Esophagus muscularis mucosa (tissue), 4 donors: ENCODE measurements at regions of chr1 and their contacts with region 1.

Region 1: GRCh38 chr1:151739590-151740375 is 18.5 kb downstream of the RIIAD1 start:
- DNase-seq: no peak
- H3K4me3 ChIP-seq: no peak overlapping the region
- H3K27ac ChIP-seq: no peak overlapping the region
- H3K4me1 ChIP-seq: peaks cover 0 to 6% (median 3%) of the 10 kb centered on the region in 4 donors
- H3K27me3 ChIP-seq: no peaks in the 10 kb centered on the region
- CTCF ChIP-seq: no peak
- EP300 ChIP-seq: no peak
- POLR2A ChIP-seq: no peak

Region 2: DNA sequence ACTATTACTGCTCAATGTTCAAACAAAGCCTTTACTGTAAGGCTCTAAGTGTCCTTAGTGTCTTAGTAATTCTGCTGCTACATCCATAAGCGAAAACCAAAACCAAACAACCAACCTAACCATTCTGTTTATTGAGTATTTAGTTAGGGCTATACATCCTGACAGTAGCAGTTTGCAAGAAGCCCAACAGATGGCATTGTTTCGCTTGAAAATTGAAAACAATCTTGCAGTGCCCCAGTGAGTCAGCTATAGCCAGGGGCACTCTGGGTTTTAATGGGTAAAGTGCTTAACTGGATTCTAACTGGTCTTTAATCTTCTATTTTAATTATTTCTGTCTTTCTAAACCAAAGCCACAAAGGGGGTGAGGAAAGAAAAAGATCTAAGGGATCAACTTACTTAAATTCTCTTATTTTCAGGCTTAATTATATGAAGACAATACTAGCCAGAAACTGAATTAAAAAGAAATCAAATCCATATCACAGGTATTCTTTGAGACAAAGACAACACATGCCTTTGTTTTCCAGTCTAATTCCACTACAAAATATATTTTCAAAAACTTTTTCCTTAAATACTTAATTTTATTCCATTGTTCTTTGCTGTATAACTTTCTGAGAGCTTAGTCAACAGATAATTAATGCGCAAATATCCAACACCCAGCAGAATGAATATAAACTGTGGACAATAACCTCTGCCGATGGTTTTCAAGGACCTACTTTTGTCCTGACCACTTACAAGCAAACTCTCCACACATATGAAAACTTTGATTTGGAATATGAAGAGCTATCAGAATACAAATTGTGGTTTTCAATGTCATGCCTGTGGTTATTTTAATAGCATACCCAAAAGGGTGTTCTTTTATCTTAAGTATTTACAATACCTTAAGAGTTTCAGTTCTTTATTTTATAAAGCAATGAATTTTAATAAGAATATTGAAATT is 295.7 kb before region 1 on chr1:
- intact Hi-C with region 1: loop called (anchors 5 kb)
- DNase-seq: no peak
- H3K4me3 ChIP-seq: no peak overlapping the region
- H3K27ac ChIP-seq: peak overlapping the region; percentile 45 to 55 (median 55)
- H3K4me1 ChIP-seq: peaks cover 37 to 90% (median 76%) of the 10 kb centered on the region in 4 donors
- H3K27me3 ChIP-seq: no peaks in the 10 kb centered on the region
- CTCF ChIP-seq: peak; percentile 75 to 81 (median 80)
- EP300 ChIP-seq: no peak
- POLR2A ChIP-seq: no peak

Region 3: DNA sequence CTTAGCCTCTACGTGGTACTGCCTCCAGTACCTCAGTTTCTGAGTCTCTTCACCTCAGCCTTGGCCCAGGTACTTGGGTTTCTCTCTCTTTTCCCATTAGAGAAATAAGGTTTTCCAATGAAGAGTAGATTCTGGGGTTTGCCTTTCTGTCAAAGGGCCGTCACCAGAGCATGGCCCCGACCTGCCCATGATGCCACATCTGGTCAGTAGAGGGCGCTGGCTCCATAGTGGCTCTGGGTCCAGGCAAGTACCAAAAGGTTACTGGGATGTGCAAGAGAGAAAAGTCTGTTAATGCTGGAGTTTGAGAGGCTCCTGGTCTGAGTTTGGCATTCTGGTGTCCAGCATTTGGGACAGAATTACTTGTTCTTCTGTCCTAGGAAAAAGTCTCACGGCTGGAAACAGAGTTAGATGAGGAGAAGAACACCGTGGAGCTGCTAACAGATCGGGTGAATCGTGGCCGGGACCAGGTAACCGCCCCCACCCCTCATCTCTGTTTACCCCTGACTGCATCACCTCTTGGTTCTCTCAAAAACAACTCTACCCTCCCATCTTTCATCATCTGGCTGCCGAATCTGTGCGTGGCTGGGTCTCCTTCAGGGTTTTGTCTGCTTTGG is 205.0 kb before region 1 on chr1:
- intact Hi-C with region 1: loop called (anchors 2 kb)
- DNase-seq: no peak
- H3K4me3 ChIP-seq: no peak overlapping the region
- H3K27ac ChIP-seq: no peak overlapping the region
- H3K4me1 ChIP-seq: peaks cover 6 to 13% (median 10%) of the 10 kb centered on the region in 4 donors
- H3K27me3 ChIP-seq: no peaks in the 10 kb centered on the region
- CTCF ChIP-seq: peak; percentile 73 to 91 (median 85)
- EP300 ChIP-seq: no peak
- POLR2A ChIP-seq: no peak

Region 4: GRCh38 chr1:151594143-151594625 is 145.6 kb before region 1 on chr1:
- intact Hi-C with region 1: loop called (anchors 2 kb)
- DNase-seq: no peak
- H3K4me3 ChIP-seq: peak overlapping the region in 2 of 4 donors; percentile 18 to 27
- H3K27ac ChIP-seq: no peak overlapping the region
- H3K4me1 ChIP-seq: peaks cover 0 to 12% (median 8%) of the 10 kb centered on the region in 4 donors
- H3K27me3 ChIP-seq: no peaks in the 10 kb centered on the region
- CTCF ChIP-seq: peak; percentile 88 to 95 (median 89)
- EP300 ChIP-seq: no peak
- POLR2A ChIP-seq: no peak

Region 5: GRCh38 chr1:151693076-151693651 is 46.6 kb before region 1 on chr1:
- intact Hi-C with region 1: loop called (anchors 2 kb)
- DNase-seq: no peak
- H3K4me3 ChIP-seq: no peak overlapping the region
- H3K27ac ChIP-seq: no peak overlapping the region
- H3K4me1 ChIP-seq: no peaks in the 10 kb centered on the region
- H3K27me3 ChIP-seq: no peaks in the 10 kb centered on the region
- CTCF ChIP-seq: peak; percentile 38 to 58 (median 56)
- EP300 ChIP-seq: no peak
- POLR2A ChIP-seq: no peak

Region 6: DNA sequence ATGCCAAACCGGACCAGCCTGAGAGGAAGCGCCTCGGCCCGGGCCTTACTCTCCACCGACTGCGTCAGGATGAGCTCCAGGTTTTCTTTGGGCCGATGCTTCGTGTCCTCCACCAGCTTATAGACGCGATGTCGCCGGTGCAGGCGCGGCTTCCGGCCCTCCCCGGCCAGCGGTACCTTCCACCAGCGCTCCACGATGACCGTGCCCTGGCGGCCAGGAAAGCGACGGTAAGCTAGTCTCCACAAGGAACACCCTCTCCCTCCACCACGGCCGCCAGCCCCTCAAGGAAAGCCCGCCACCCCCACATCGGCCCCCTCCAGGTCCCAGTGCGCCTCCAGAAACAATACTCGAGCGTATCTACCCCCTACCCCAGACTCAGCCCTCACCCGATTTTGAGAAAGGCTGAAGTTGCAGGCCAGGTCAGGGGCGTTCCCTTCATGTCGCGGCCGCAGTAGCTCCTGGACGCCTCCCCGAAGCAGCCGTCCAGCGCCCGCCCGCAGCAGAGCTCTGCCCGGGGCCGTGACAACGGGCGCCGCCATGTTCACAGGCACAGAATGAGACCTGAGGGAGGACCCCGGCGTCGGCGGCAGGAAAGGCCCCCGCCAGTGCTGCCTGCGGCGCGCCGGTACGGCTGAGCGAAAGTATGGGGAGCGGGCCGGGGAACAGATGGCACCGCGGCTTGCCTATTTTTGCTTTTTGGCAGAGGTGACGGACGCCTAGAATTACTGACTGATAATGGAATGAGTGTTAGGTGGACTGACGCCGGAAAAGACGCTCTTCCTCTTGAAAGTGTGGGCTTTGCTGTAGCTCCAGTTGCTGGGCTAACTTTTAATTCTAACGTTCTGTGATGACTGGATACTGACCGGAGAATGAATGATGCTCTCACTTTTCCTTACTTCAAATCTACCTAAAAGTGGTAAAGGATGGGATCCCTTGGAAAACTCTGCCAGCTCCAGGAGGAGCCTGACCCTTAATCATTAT is 23.4 kb after region 1 on chr1 and contains the start of gene MRPL9:
- intact Hi-C with region 1: no loop called
- DNase-seq: peak; percentile 95
- H3K4me3 ChIP-seq: peak within 1 kb of the TSS; percentile 72 to 95 (median 86)
- H3K27ac ChIP-seq: peak within 1 kb of the TSS; percentile 85 to 94 (median 90)
- H3K4me1 ChIP-seq: peaks cover 9 to 20% (median 15%) of the 10 kb centered on the region in 4 donors
- H3K27me3 ChIP-seq: no peaks in the 10 kb centered on the region
- CTCF ChIP-seq: no peak
- EP300 ChIP-seq: no peak
- POLR2A ChIP-seq: no peak
- total RNA-seq, gene MRPL9: 49.8 to 57.0 (median 56.5) TPM

Region 7: DNA sequence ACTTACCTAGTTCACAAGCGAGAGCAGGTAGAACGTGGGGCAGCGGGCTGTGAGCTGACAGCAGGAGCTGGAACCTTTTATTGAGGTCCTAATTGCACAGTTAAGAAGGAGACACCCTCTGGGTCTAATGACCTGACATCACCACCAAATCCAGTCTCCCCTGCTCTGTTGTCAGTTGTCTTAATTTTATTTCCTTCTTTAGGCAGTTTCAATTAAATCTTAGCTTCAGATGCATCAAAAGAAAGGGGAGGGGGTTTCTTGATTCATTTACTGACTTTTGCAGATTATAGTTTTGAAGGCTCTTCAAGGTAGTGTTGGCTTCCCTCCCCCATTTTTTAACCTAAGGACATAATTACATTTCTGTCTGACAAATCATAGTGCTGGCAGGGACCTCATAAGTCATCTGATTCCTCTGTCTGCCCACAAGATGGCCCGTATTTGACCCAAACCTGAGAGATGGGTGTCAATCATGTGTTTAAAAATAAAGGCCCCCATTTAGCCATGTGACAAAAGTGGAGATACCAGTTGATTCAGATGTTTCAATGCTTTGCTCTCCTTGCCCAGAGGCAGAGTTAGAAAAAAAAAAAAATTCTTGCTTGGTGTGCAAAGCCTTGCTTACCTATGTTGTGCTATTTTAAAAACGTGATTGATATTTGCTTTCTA is 349.4 kb after region 1 on chr1 and contains the start of gene TCHHL1:
- intact Hi-C with region 1: no loop called
- DNase-seq: no peak
- H3K4me3 ChIP-seq: no peak within 1 kb of the TSS
- H3K27ac ChIP-seq: no peak within 1 kb of the TSS
- H3K4me1 ChIP-seq: no peaks in the 10 kb centered on the region
- H3K27me3 ChIP-seq: peaks cover 0 to 11% (median 0%) of the 10 kb centered on the region in 4 donors
- CTCF ChIP-seq: no peak
- EP300 ChIP-seq: no peak
- POLR2A ChIP-seq: no peak
- total RNA-seq, gene TCHHL1: not detected